ENCODE measurements at regions of chr11 and their contacts with region 1.

Region 1: DNA sequence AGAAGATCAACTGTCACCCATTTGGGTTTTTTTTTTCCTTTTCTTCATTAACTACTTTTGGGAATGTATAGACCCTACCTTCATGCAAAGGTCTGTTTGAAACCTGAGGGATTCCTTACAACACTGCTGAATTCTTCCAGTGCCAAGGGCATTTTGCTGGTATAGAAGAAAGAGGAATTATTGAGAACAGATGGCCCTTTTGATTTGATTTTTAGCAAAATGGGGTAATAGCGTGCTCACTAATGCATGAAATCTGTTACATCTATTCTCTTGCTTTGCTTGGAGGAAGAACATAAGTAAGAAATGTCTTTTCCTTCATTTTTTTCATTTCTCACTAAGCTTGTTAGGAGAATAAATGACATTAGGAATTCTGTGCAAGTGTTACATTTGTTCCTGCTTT is 501.9 kb downstream of the TMEM135 start:
- DNase-seq: no peak
- ATAC-seq: no peak
- H3K4me3 ChIP-seq: no peak overlapping the region
- H3K4me3 Mint-ChIP-seq: no peak overlapping the region
- H3K27ac ChIP-seq: no peak overlapping the region
- H3K27ac Mint-ChIP-seq: no peak overlapping the region
- H3K4me1 ChIP-seq: no peaks in the 10 kb centered on the region
- H3K4me1 Mint-ChIP-seq: no peaks in the 10 kb centered on the region
- H3K27me3 ChIP-seq: no peaks in the 10 kb centered on the region
- H3K27me3 Mint-ChIP-seq: no peaks in the 10 kb centered on the region
- CTCF ChIP-seq: no peak

Region 2: DNA sequence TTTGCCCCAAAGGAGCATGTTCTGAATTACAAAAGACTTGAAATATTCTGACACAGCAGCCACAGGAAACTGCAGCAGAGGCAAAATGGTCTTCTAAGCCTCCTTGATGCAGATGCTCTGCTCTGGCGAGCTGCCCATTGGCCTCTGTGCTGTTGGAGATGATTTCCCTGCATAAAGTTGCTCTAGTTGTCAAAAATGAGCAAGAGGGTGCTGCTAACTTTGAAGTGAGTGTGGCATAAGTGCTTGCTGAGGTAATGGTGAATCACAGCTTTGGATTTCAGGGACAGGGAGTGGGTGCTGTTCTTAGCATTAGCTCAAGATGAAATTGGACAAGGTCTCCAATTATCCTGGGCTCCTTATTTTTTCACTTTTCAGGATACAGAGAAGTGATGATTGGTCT is 66.4 kb before region 1 on chr11:
- CTCF ChIA-PET with region 1: no interaction called
- POLR2A ChIA-PET with region 1: no interaction called
- intact Hi-C with region 1: no loop called
- DNase-seq: no peak
- ATAC-seq: no peak
- H3K4me3 ChIP-seq: no peak overlapping the region
- H3K4me3 Mint-ChIP-seq: no peak overlapping the region
- H3K27ac ChIP-seq: no peak overlapping the region
- H3K27ac Mint-ChIP-seq: no peak overlapping the region
- H3K4me1 ChIP-seq: no peaks in the 10 kb centered on the region
- H3K4me1 Mint-ChIP-seq: no peaks in the 10 kb centered on the region
- H3K27me3 ChIP-seq: no peaks in the 10 kb centered on the region
- H3K27me3 Mint-ChIP-seq: no peaks in the 10 kb centered on the region
- CTCF ChIP-seq: no peak

Region 3: DNA sequence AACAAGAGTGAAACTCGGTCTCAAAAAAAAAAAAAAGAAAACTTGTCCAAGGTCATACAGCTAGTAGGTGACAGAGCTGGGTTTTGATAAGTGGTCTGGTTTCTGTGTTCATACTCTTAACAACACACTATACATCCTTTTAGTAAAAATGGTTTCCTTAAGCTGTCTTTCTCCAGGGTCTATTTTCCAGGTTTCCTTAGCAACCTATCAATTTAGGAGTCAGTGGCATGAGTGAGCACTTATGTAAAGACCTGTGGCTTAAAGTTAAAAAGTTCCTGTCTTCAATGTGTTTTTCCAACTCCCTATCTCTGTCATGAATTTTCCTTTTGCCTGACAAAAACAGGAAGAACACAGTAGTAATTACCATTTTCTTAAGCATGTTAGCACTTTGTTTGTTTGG is 21.3 kb before region 1 on chr11:
- CTCF ChIA-PET with region 1: no interaction called
- POLR2A ChIA-PET with region 1: no interaction called
- intact Hi-C with region 1: no loop called
- DNase-seq: no peak
- ATAC-seq: no peak
- H3K4me3 ChIP-seq: no peak overlapping the region
- H3K4me3 Mint-ChIP-seq: no peak overlapping the region
- H3K27ac ChIP-seq: no peak overlapping the region
- H3K27ac Mint-ChIP-seq: no peak overlapping the region
- H3K4me1 ChIP-seq: no peaks in the 10 kb centered on the region
- H3K4me1 Mint-ChIP-seq: no peaks in the 10 kb centered on the region
- H3K27me3 ChIP-seq: no peaks in the 10 kb centered on the region
- H3K27me3 Mint-ChIP-seq: no peaks in the 10 kb centered on the region
- CTCF ChIP-seq: no peak

Region 4: DNA sequence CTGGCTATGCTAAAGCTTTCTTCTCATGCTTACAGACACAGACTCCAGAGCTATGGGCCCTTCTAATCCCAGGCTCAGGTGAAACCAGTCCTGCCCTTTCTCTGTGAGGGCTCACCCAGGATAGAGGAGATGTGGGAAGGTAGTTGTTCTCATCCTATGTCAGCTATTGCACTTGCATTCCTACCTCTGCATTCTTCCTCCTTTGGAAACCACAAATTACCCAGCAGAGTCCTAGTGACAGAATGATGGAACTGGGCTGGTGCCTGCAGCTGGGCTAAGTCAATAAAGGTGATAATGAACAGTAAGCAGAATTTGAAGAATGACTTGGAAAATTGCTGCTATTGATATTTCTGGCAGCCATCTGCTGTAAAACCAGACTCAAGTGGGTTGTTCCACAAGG is 58.1 kb after region 1 on chr11:
- CTCF ChIA-PET with region 1: no interaction called
- POLR2A ChIA-PET with region 1: no interaction called
- intact Hi-C with region 1: loop called in 1 of 2 experiments (anchors 10 kb)
- DNase-seq: no peak
- ATAC-seq: no peak
- H3K4me3 ChIP-seq: no peak overlapping the region
- H3K4me3 Mint-ChIP-seq: no peak overlapping the region
- H3K27ac ChIP-seq: no peak overlapping the region
- H3K27ac Mint-ChIP-seq: no peak overlapping the region
- H3K4me1 ChIP-seq: no peaks in the 10 kb centered on the region
- H3K4me1 Mint-ChIP-seq: no peaks in the 10 kb centered on the region
- H3K27me3 ChIP-seq: no peaks in the 10 kb centered on the region
- H3K27me3 Mint-ChIP-seq: no peaks in the 10 kb centered on the region
- CTCF ChIP-seq: no peak